ENCODE measurements at regions of chr9 and their contacts with region 1.

Region 1: DNA sequence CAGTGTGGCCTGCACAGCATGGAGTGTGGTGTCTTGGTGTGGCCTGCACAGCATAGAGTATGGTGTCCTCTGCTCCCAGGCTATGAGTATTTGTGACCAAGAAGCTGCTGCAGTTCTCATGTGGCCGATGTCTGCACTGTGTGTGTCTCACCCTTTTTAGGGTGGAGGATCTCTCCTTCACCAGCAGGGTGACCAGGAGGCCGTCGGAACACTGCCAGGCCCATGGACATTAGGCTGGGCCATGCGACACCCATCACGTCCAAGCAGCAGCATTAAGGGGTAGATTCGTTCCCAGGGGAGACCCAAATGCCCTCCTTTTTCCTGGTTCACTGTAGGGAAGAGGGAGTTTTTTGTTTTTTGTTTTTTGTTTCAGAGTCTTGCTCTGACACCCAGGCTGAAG is 115.3 kb upstream of the SPIN1 start:
- DNase-seq: no peak
- H3K4me3 ChIP-seq: no peak overlapping the region
- H3K27ac ChIP-seq: no peak overlapping the region
- H3K4me1 ChIP-seq: peaks cover 3% of the 10 kb centered on the region
- H3K27me3 ChIP-seq: no peaks in the 10 kb centered on the region
- CTCF ChIP-seq: no peak
- POLR2A ChIP-seq: no peak

Region 2: GRCh38 chr9:88197781-88198340 is 75.1 kb before region 1 on chr9:
- CTCF ChIA-PET with region 1: no interaction called
- POLR2A ChIA-PET with region 1: no interaction called
- dilution Hi-C with region 1: no loop called
- intact Hi-C with region 1: loop called (anchors 5 kb)
- DNase-seq: no peak
- H3K4me3 ChIP-seq: no peak overlapping the region
- H3K27ac ChIP-seq: no peak overlapping the region
- H3K4me1 ChIP-seq: no peaks in the 10 kb centered on the region
- H3K27me3 ChIP-seq: no peaks in the 10 kb centered on the region
- CTCF ChIP-seq: no peak
- POLR2A ChIP-seq: no peak

Region 3: GRCh38 chr9:88534456-88535261 is 261.7 kb after region 1 on chr9 and contains the start of gene NXNL2:
- CTCF ChIA-PET with region 1: no interaction called
- POLR2A ChIA-PET with region 1: no interaction called
- dilution Hi-C with region 1: no loop called
- intact Hi-C with region 1: loop called (anchors 5 kb)
- DNase-seq: peak; percentile 61
- H3K4me3 ChIP-seq: peak within 1 kb of the TSS; percentile 13 to 49 (median 14)
- H3K27ac ChIP-seq: no peak within 1 kb of the TSS
- H3K4me1 ChIP-seq: peaks cover 5% of the 10 kb centered on the region
- H3K27me3 ChIP-seq: peaks cover 16 to 23% of the 10 kb centered on the region in 2 experiments
- CTCF ChIP-seq: no peak
- POLR2A ChIP-seq: no peak
- total RNA-seq, gene NXNL2: not detected in 2 replicates

Measured in endothelial cell of umbilical vein (primary cell).